Activated CD8-positive, alpha-beta T cell treated with anti-CD3 and anti-CD28 coated beads, Interleukin-2, amount 10 ng/mL, durations not matched to agents 7 days and 5 days (primary cell): ENCODE measurements at regions of chr15 and their contacts with region 1.

Region 1: DNA sequence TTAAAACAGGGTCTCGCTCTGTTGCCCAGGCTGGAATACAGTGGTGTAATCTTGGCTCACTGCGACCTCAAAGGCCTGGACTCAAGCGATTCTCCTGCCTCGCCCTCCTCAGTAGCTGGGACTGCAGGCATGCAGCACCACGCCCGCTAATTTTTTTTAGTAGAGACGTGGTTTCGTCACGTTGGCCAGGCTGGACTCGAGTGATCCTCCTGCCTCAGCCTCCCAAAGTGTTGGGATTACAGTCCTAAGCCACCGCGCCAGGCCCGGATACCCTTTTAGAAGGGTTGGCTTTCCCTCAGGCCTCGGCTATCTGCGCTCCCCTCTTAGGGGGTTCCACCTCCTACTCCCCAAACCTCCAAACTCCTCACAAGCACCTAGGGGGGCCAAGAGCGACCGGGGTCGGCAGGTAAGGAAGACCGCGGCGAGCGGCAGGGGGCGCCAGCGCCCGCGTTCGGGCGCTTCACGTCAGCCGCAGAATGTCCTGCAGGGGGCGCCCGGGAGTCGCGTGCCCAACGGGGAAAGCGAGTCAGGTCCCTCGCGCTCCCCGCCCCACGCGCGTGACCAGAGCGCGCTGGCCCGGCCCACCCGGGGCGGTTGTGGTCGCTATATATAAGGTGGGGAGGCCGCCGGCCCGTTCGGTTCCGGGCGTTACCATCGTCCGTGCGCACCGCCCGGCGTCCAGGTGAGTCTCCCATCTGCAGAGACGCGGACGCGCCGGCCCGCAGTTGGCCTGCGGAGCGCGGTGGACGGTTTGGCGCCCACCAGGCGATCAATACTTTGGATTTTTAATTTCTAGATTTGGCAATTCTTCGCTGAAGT is 51.8 kb upstream of the GATM start:
- DNase-seq: peak; percentile 89
- ATAC-seq: peak; percentile 94
- H3K4me3 Mint-ChIP-seq: peak overlapping the region; percentile 57
- H3K27ac Mint-ChIP-seq: no peak overlapping the region
- H3K4me1 Mint-ChIP-seq: peaks cover 10% of the 10 kb centered on the region
- H3K27me3 Mint-ChIP-seq: peaks cover 28% of the 10 kb centered on the region

Region 2: GRCh38 chr15:45314960-45315359 is 115.2 kb before region 1 on chr15:
- CTCF ChIA-PET with region 1: no interaction called
- POLR2A ChIA-PET with region 1: no interaction called
- DNase-seq: peak; percentile 21
- ATAC-seq: no peak
- H3K4me3 Mint-ChIP-seq: no peak overlapping the region
- H3K27ac Mint-ChIP-seq: no peak overlapping the region
- H3K4me1 Mint-ChIP-seq: no peaks in the 10 kb centered on the region
- H3K27me3 Mint-ChIP-seq: peaks cover 14% of the 10 kb centered on the region

Region 3: DNA sequence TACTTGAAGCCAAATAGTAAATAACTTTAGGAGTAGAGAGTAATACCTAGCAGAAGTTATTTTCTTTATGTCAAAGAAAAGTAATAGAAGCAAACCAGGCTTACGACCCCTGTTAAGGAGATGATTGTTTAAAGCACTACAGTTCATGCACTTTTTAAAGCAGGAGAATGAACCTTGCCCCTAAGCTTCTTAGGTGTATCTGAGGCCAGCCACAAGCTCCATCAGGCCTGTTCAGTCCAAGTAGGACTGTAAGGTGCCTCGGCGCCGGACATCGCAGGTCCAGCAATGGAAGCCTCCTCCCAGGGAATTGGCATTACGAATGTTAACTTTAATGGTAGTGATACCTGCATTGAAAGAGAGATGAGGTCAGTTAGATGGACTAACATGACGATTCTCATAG is 68.3 kb before region 1 on chr15:
- CTCF ChIA-PET with region 1: no interaction called
- POLR2A ChIA-PET with region 1: no interaction called
- DNase-seq: no peak
- ATAC-seq: no peak
- H3K4me3 Mint-ChIP-seq: no peak overlapping the region
- H3K27ac Mint-ChIP-seq: no peak overlapping the region
- H3K4me1 Mint-ChIP-seq: no peaks in the 10 kb centered on the region
- H3K27me3 Mint-ChIP-seq: no peaks in the 10 kb centered on the region

Region 4: DNA sequence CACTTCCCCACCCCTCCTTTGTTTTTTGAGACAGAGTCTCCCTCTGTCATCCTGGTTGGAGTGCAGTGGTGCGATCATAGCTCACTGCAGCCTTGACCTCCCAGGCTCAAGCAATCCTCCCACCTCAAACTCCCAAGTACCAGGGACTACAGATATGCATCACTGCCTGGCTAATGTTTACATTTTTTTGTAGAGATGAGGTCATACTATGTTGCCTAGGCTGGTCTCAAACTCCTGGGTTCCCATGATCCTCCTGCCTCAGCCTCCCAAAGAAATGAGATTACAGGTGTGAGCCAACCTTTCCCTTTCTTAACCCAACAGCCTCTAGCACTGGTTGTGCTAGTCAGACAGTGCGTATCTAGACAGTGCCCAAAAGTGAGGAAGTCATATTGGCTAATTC is 45.5 kb before region 1 on chr15:
- CTCF ChIA-PET with region 1: no interaction called
- POLR2A ChIA-PET with region 1: no interaction called
- DNase-seq: no peak
- ATAC-seq: no peak
- H3K4me3 Mint-ChIP-seq: no peak overlapping the region
- H3K27ac Mint-ChIP-seq: no peak overlapping the region
- H3K4me1 Mint-ChIP-seq: no peaks in the 10 kb centered on the region
- H3K27me3 Mint-ChIP-seq: peaks cover 43% of the 10 kb centered on the region

Region 5: GRCh38 chr15:45448066-45448510 is 17.9 kb after region 1 on chr15:
- CTCF ChIA-PET with region 1: interaction called, 202 read pairs
- POLR2A ChIA-PET with region 1: no interaction called
- DNase-seq: no peak
- ATAC-seq: no peak
- H3K4me3 Mint-ChIP-seq: no peak overlapping the region
- H3K27ac Mint-ChIP-seq: no peak overlapping the region
- H3K4me1 Mint-ChIP-seq: no peaks in the 10 kb centered on the region
- H3K27me3 Mint-ChIP-seq: peaks cover 7% of the 10 kb centered on the region

Region 6: GRCh38 chr15:45611305-45611704 is 181.1 kb after region 1 on chr15:
- CTCF ChIA-PET with region 1: interaction called, 30 read pairs
- POLR2A ChIA-PET with region 1: no interaction called
- DNase-seq: peak; percentile 21
- ATAC-seq: no peak
- H3K4me3 Mint-ChIP-seq: no peak overlapping the region
- H3K27ac Mint-ChIP-seq: no peak overlapping the region
- H3K4me1 Mint-ChIP-seq: peaks cover 5% of the 10 kb centered on the region
- H3K27me3 Mint-ChIP-seq: no peaks in the 10 kb centered on the region